SK-N-SH (cell line): ENCODE measurements at regions of chr2 and their contacts with region 1.

Region 1: GRCh38 chr2:238523158-238524110 is 96.7 kb downstream of the ASB1 start:
- DNase-seq: peak; percentile 87
- H3K4me3 ChIP-seq: no peak overlapping the region
- H3K27ac ChIP-seq: peak overlapping the region in 1 of 2 experiments; percentile 31; a peak in 1 of 4 replicates
- H3K4me1 ChIP-seq: peaks cover 0 to 22% of the 10 kb centered on the region in 2 experiments; a peak in 1 of 4 replicates
- H3K27me3 ChIP-seq: no peaks in the 10 kb centered on the region
- CTCF ChIP-seq: no peak; the same call in 1 of the 2 replicates
- EP300 ChIP-seq: no peak
- RAD21 ChIP-seq: peak; percentile 67

Region 2: GRCh38 chr2:238513346-238513745 is 10.1 kb before region 1 on chr2:
- CTCF ChIA-PET with region 1: interaction called, 17 read pairs
- POLR2A ChIA-PET with region 1: no interaction called
- DNase-seq: peak; percentile 63
- H3K4me3 ChIP-seq: no peak overlapping the region
- H3K27ac ChIP-seq: no peak overlapping the region
- H3K4me1 ChIP-seq: no peaks in the 10 kb centered on the region; a peak in 1 of 4 replicates
- H3K27me3 ChIP-seq: no peaks in the 10 kb centered on the region
- CTCF ChIP-seq: peak; percentile 70
- EP300 ChIP-seq: no peak
- RAD21 ChIP-seq: peak; percentile 59

Region 3: DNA sequence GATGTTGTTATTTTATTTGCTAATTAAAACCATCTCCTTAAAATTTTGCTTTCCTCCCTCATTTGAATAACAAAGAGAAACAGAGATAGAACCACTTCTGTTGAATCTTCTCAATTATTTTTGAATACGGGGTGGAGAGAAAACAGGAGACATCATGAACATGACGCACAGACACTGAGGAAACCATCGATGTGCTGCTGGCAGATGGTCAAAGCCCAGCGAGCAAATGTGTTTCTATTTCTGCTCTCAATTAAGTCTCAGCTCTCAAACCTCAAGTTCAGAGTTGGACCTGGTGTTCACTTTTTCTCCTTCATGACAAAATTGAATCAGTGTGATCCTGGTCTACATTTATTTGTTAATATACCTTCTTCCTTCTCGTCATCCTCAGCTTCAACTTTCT is 288.3 kb after region 1 on chr2:
- CTCF ChIA-PET with region 1: no interaction called
- POLR2A ChIA-PET with region 1: no interaction called
- DNase-seq: no peak
- H3K4me3 ChIP-seq: no peak overlapping the region
- H3K27ac ChIP-seq: no peak overlapping the region
- H3K4me1 ChIP-seq: no peaks in the 10 kb centered on the region
- H3K27me3 ChIP-seq: no peaks in the 10 kb centered on the region
- CTCF ChIP-seq: no peak
- EP300 ChIP-seq: no peak
- RAD21 ChIP-seq: no peak